ENCODE measurements at regions of chr17 and their contacts with region 1.

Region 1: DNA sequence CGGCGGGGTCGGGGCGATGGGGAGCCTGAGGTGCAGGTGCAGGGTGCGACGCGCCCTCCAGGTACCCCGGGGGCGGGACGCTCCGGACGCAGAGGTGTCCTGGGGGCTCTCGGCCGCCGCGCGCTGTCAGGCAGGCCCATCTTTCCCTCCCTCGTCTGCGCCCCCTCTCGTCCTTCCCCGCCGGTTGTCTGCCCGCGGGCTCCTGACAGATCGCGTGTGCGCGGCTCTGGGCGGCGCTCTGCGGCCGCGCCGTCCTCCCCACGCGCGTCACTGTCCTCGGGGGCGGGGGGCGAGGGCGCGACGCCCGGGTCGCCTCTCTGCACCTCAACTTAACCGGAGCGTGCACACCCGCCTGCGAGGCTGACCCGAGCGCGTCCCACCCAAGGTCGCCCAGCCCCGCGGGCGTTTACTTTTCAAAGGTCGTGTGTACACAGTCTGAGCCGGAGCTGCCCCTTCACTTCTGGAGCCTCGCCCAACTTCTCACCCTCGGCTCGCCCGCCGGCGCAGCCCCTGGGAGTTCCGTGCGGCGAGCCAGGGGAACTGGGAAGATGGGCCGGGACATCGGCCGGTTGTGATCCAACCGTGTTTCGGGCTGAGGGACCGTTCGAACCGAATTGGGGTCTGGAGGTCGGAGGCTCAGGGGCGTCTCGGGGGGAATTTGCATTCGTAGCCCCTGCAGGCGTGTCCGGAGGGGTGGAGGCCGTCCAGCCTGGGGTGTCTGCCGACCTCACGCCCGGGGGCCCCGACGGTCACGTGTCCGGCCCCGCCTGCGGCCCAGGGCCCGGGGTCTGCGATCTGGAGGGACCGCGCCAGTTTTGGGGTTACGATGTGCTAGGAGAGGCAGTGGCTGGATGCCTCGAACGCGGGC is 636 bp downstream of the AKAP1 start:
- DNase-seq: peak; percentile 63
- H3K4me3 ChIP-seq: peak overlapping the region; percentile 56
- H3K27ac ChIP-seq: peak overlapping the region; percentile 80
- H3K4me1 ChIP-seq: peaks cover 5% of the 10 kb centered on the region
- H3K27me3 ChIP-seq: no peaks in the 10 kb centered on the region
- CTCF ChIP-seq: 0 out of 2 replicates have a peak, but pooled peaks have one; percentile 30

Region 2: DNA sequence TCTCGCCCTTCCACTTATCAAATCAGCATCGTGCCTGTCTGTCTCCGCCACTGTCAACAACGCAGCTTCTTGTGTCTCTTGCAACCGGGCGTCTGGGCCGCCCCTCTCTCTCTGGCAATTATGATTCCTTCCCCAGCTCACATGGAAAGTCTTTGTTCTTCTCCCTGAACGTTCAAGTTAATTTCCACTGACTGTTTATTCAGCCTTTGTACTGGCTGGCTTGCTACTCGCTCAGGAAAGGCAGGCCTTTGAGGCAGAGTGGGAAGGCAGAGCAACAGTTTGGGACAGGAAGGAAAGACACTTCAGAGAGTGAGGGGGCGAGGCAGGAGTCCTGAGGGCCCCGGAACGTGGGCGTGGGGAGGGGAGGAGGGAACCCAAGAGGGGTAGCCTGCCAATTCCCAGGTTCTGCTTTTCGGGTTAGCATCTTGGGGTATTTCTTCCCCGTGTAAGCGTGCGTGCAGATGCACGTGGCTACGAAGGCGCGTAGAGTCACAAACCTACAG is 50.2 kb after region 1 on chr17:
- CTCF ChIA-PET with region 1: no interaction called
- POLR2A ChIA-PET with region 1: no interaction called
- intact Hi-C with region 1: no loop called
- DNase-seq: peak; percentile 17
- H3K4me3 ChIP-seq: no peak overlapping the region
- H3K27ac ChIP-seq: no peak overlapping the region
- H3K4me1 ChIP-seq: peaks cover 7% of the 10 kb centered on the region
- H3K27me3 ChIP-seq: no peaks in the 10 kb centered on the region
- CTCF ChIP-seq: no peak

Region 3: GRCh38 chr17:57513569-57513968 is 427.9 kb after region 1 on chr17:
- CTCF ChIA-PET with region 1: no interaction called
- POLR2A ChIA-PET with region 1: interaction called, 18 read pairs
- intact Hi-C with region 1: no loop called
- DNase-seq: no peak
- H3K4me3 ChIP-seq: no peak overlapping the region
- H3K27ac ChIP-seq: no peak overlapping the region
- H3K4me1 ChIP-seq: peaks cover 3% of the 10 kb centered on the region
- H3K27me3 ChIP-seq: no peaks in the 10 kb centered on the region
- CTCF ChIP-seq: no peak

Region 4: GRCh38 chr17:57761887-57762286 is 676.2 kb after region 1 on chr17:
- CTCF ChIA-PET with region 1: interaction called, 10 read pairs
- POLR2A ChIA-PET with region 1: no interaction called
- intact Hi-C with region 1: no loop called
- DNase-seq: no peak
- H3K4me3 ChIP-seq: no peak overlapping the region
- H3K27ac ChIP-seq: no peak overlapping the region
- H3K4me1 ChIP-seq: peaks cover 4% of the 10 kb centered on the region
- H3K27me3 ChIP-seq: no peaks in the 10 kb centered on the region
- CTCF ChIP-seq: no peak

Measured in A673 (cell line).